ENCODE measurements at regions of chr5 and their contacts with region 1.

Region 1: GRCh38 chr5:66511491-66511890 is 84.7 kb upstream of the MAST4 start:
- DNase-seq: no peak
- ATAC-seq: no peak
- H3K4me3 ChIP-seq: no peak overlapping the region
- H3K4me3 Mint-ChIP-seq: no peak overlapping the region
- H3K27ac ChIP-seq: no peak overlapping the region
- H3K27ac Mint-ChIP-seq: no peak overlapping the region
- H3K4me1 ChIP-seq: peaks cover 44% of the 10 kb centered on the region in 2 donors
- H3K4me1 Mint-ChIP-seq: peaks cover 44% of the 10 kb centered on the region
- H3K27me3 ChIP-seq: no peaks in the 10 kb centered on the region
- H3K27me3 Mint-ChIP-seq: no peaks in the 10 kb centered on the region
- CTCF ChIP-seq: no peak

Region 2: GRCh38 chr5:66469684-66470083 is 41.8 kb before region 1 on chr5:
- CTCF ChIA-PET with region 1: no interaction called
- POLR2A ChIA-PET with region 1: no interaction called
- intact Hi-C with region 1: loop called (anchors 5 kb)
- DNase-seq: no peak
- ATAC-seq: no peak
- H3K4me3 ChIP-seq: no peak overlapping the region
- H3K4me3 Mint-ChIP-seq: no peak overlapping the region
- H3K27ac ChIP-seq: no peak overlapping the region
- H3K27ac Mint-ChIP-seq: no peak overlapping the region
- H3K4me1 ChIP-seq: peaks cover 4 to 8% of the 10 kb centered on the region in 2 donors
- H3K4me1 Mint-ChIP-seq: peaks cover 13% of the 10 kb centered on the region
- H3K27me3 ChIP-seq: no peaks in the 10 kb centered on the region
- H3K27me3 Mint-ChIP-seq: no peaks in the 10 kb centered on the region
- CTCF ChIP-seq: no peak

Measured in B cell (primary cell).